OCI-LY7 (cell line): ENCODE measurements at regions of chr1 and their contacts with region 1.

Region 1: DNA sequence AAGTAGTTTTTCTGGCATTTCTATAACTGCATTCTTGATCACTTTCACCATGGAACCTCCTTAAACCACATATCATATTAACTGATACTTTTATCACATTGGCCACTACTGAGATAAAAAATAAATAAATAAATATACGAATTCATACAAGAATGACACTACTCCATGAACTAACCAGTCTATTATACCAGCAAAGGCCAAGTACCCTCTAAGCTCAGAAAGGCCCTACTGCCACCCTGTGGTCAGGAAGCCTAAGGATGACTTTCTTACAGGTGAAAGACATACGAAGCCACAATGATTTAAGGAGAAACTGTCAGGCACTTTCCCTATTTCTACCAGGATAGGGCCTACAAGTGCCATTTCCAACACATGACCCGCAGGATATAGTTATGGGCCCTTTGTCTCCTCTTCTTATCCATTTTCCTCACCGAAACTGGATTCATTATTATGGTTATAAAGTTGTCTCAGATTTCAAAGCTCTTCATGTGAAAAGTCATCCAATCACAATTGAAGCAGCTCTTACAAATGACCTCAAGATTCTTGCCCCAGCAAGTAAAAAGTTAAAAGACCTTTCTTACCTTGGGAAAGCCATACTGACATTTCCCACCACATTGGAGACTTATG is 23.9 kb downstream of the DNAJC8 start:
- DNase-seq: peak; percentile 82
- H3K4me3 ChIP-seq: no peak overlapping the region
- H3K27ac ChIP-seq: peak overlapping the region; percentile 17
- H3K4me1 ChIP-seq: peaks cover 9% of the 10 kb centered on the region
- CTCF ChIP-seq: peak; percentile 96

Region 2: DNA sequence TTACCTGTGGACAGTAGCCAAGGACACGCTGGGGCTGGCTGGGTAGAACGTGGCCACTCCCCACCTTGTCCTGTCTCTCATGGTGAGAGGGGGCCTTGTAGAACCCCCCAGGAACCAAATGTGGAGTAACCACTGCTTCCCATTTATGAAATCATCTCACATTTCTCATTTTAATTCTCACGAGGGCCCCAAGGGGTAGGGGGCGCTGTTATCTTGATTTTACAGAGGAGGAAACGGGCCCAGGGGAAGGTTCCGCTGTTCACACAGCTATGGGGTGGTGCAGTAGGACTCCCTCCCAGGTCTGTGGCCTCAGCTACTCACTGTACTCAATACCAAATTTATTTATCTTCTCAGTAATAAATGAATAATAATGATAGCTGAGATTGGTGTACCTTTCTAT is 268.6 kb before region 1 on chr1:
- CTCF ChIA-PET with region 1: no interaction called
- POLR2A ChIA-PET with region 1: no interaction called
- intact Hi-C with region 1: loop called (anchors 2 kb)
- DNase-seq: peak; percentile 78
- H3K4me3 ChIP-seq: no peak overlapping the region
- H3K27ac ChIP-seq: no peak overlapping the region
- H3K4me1 ChIP-seq: peaks cover 11% of the 10 kb centered on the region
- CTCF ChIP-seq: peak; percentile 87

Region 3: GRCh38 chr1:28172713-28173150 is 36.2 kb before region 1 on chr1:
- CTCF ChIA-PET with region 1: interaction called, 11 read pairs
- POLR2A ChIA-PET with region 1: interaction called, 3 read pairs
- intact Hi-C with region 1: loop called (anchors 1 kb)
- DNase-seq: peak; percentile 93
- H3K4me3 ChIP-seq: peak overlapping the region; percentile 77
- H3K27ac ChIP-seq: peak overlapping the region; percentile 97
- H3K4me1 ChIP-seq: peaks cover 79% of the 10 kb centered on the region
- CTCF ChIP-seq: no peak